ENCODE measurements at regions of chr1 and their contacts with region 1.

Region 1: GRCh38 chr1:151006327-151007052 is at the start of gene MINDY1:
- H3K4me3 ChIP-seq: peak within 1 kb of the TSS; percentile 53
- H3K27ac ChIP-seq: peak within 1 kb of the TSS; percentile 58
- H3K4me1 ChIP-seq: 0 out of 2 replicates have a peak, but pooled peaks cover 3% of the 10 kb centered on the region
- CTCF ChIP-seq: no peak

Region 2: GRCh38 chr1:150979092-150980056 is 27.1 kb before region 1 on chr1:
- CTCF ChIA-PET with region 1: interaction called, 47 read pairs
- POLR2A ChIA-PET with region 1: interaction called, 9 read pairs
- H3K4me3 ChIP-seq: no peak overlapping the region
- H3K27ac ChIP-seq: no peak overlapping the region
- H3K4me1 ChIP-seq: peaks cover 7% of the 10 kb centered on the region; the same call in 1 of the 2 replicates
- CTCF ChIP-seq: peak; percentile 97